IMR-90 (cell line): ENCODE measurements at regions of chr13 and their contacts with region 1.

Region 1: DNA sequence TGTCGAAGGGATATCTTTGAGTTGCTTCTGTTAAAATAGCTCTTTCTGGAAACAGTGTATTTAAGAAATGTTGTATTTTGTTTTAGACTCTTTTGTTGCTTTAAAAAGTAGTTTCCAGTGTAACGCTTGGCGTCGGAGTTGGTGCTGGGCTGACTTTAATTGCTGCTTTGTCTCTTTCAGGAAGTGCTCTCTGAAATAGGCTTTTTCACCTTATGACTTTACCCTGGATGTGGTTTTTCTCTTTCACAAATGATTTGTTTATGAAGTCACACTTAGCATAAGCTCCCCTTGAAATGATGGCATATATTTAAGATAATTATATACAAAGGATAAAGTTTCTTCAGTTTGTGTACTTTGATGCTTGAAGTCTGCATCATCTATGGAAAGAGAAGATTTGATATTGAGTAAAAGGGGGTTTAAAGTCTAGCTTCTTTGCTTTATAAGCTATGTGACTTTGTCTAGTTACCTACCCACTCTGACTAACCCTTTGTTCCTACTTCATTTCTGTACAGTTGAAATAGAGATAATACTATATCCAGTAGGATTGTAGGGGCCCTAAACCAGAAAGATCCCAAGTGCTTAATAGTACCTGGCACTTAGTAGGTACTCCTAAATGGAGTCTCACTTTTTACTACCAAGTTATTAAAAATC is at the start of gene GPR18:
- DNase-seq: peak; percentile 24
- ATAC-seq: peak; percentile 59
- H3K4me3 ChIP-seq: no peak within 1 kb of the TSS
- H3K27ac ChIP-seq: no peak within 1 kb of the TSS
- H3K4me1 ChIP-seq: peaks cover 4% of the 10 kb centered on the region; the same call in 1 of the 2 replicates
- H3K27me3 ChIP-seq: no peaks in the 10 kb centered on the region
- CTCF ChIP-seq: no peak
- POLR2A ChIP-seq: no peak
- RAD21 ChIP-seq: no peak
- total RNA-seq, gene GPR18: not detected in 2 replicates

Region 2: DNA sequence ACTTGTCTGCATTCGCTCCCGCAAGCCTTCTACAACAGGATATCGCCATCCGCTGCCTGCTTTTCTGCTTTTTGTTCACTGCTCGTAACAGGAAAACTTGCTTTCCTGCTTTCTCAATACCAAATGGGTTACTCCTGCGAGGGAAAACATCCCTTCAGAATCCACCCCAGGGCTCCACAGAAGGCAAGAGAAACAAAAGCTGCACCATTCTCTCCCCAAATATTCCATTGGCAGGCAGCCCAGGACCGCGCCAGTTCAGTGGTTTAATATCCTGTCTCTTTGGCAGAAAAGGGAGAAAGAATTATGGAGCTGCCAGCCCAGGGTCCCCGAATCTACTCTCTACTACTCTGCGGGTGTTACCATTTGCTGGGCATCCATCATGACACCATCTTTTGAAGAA is 195.7 kb before region 1 on chr13:
- CTCF ChIA-PET with region 1: no interaction called
- POLR2A ChIA-PET with region 1: no interaction called
- dilution Hi-C with region 1: no loop called
- in situ Hi-C with region 1: no loop called
- intact Hi-C with region 1: no loop called
- DNase-seq: peak; percentile 30
- ATAC-seq: peak; percentile 24
- H3K4me3 ChIP-seq: no peak overlapping the region
- H3K27ac ChIP-seq: no peak overlapping the region
- H3K4me1 ChIP-seq: peaks cover 12% of the 10 kb centered on the region
- H3K27me3 ChIP-seq: no peaks in the 10 kb centered on the region
- CTCF ChIP-seq: no peak
- POLR2A ChIP-seq: no peak
- RAD21 ChIP-seq: no peak

Region 3: GRCh38 chr13:99200432-99201167 is 57.7 kb before region 1 on chr13 and contains the start of gene UBAC2:
- CTCF ChIA-PET with region 1: interaction called, 3 read pairs
- POLR2A ChIA-PET with region 1: no interaction called
- dilution Hi-C with region 1: no loop called
- in situ Hi-C with region 1: no loop called
- intact Hi-C with region 1: loop called (anchors 5 kb)
- DNase-seq: peak; percentile 91
- ATAC-seq: peak; percentile 96
- H3K4me3 ChIP-seq: peak within 1 kb of the TSS; percentile 93
- H3K27ac ChIP-seq: peak within 1 kb of the TSS; percentile 91
- H3K4me1 ChIP-seq: no peaks in the 10 kb centered on the region; the same call in 1 of the 2 replicates
- H3K27me3 ChIP-seq: no peaks in the 10 kb centered on the region
- CTCF ChIP-seq: no peak
- POLR2A ChIP-seq: peak; percentile 98
- RAD21 ChIP-seq: no peak
- total RNA-seq, gene UBAC2: 20.8 and 23.6 TPM in 2 replicates

Region 4: DNA sequence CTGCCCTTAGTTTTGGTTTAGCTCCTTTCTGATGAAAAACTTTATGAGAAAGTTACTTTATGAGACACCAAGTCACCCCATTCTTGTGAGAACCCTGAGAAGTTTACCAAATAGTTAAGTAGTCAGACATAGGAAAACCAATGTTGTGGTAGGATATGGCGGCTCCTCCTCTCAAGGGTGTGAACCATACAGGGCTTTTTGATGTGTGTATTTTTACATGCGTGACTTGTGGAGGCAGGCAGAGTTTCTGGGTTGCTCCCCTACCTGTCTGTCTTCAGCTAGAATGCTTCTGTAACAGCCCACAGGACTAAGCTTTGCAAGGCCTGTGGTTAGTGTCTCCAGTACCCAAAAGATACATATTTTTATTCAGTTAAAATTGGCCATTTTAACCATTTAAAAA is 39.4 kb before region 1 on chr13:
- CTCF ChIA-PET with region 1: no interaction called
- POLR2A ChIA-PET with region 1: no interaction called
- dilution Hi-C with region 1: no loop called
- in situ Hi-C with region 1: no loop called
- intact Hi-C with region 1: loop called (anchors 1 kb)
- DNase-seq: no peak
- ATAC-seq: no peak; the same call in 1 of the 2 replicates
- H3K4me3 ChIP-seq: no peak overlapping the region
- H3K27ac ChIP-seq: no peak overlapping the region
- H3K4me1 ChIP-seq: peaks cover 6% of the 10 kb centered on the region; the same call in 1 of the 2 replicates
- H3K27me3 ChIP-seq: no peaks in the 10 kb centered on the region
- CTCF ChIP-seq: no peak
- POLR2A ChIP-seq: no peak
- RAD21 ChIP-seq: no peak